Psoas muscle (tissue), 8 donors: ENCODE measurements at regions of chr15 and their contacts with region 1.

Region 1: DNA sequence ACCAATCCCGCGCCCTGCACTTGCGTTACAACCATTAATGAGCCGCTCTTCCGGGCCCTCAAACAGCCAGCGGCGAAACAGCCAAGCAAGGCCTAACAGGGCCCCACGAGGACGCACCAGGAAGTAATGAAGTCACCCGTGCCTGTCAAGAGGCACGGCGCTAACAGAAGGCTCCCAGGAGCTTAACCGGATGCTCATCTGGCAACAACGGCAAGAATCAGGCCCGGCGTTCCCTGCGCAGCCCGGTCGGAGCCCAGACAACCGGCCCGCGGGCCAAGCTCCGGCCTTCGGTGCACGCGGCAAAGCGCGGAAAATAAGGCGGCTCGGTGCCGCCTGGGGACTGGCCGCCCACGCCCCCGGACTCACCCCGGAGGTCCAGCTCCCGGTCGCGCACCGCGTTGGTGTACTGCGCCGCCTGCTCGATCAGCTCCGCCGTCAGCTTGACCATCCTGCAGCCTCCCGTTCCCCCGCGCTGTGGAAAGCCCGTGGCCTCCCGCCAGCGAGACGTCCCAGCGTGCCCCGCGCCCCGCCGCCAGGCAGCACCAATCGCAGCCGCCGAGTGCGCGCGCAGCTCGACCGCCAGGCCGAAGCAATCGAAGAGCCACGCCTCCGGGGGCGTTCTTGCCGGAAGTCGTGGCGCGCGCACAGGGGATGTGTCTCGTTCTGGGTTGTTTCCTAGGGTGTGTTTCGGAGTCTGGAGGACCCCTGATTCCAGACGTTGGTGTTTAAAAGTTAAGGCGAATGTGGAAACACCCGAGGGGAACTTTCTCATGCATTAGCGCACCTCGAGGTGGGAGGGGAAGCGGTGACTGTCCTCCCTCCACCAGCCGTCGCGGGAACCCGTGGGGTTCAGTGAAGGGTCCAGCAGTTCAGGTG is at the start of gene SNRPA1:
- DNase-seq: peak; percentile 99 to 100
- ATAC-seq: peak; percentile 94 to 95 (median 95)
- H3K4me3 ChIP-seq: peak within 1 kb of the TSS; percentile 99
- H3K27ac ChIP-seq: peak within 1 kb of the TSS; percentile 98
- H3K4me1 ChIP-seq: peaks cover 35% of the 10 kb centered on the region
- H3K27me3 ChIP-seq: no peaks in the 10 kb centered on the region
- CTCF ChIP-seq: no peak
- total RNA-seq, gene SNRPA1: 14.8 to 42.3 (median 28.0) TPM

Region 2: DNA sequence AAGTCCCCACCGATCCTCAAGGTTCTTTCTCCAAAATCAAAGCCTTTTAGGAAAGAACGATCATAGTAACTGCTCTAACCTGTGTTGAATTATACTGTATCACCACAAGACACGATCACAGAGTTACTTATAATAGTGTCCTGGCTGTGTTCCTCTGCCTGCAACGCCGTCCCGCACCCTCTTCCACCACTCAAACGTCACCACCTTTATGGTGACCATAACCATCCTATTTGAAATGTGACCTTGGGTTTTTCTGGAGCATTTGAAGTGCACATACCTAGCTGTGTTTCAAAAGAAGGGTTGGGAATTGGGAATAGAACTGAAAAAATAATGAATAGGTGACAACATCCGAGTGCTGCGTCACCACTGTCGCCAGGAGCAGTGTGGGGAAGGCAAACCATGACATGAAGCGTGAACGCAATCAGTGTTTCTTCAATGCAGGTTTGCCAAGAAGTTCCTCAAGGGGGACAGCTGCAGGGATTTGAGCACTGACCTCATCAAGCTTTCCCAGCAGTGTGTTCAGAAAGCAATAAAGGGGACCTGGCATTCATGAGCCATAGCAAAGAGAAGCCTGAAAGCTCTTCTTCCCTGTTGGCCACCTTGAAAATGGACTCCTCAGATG is 16.9 kb before region 1 on chr15:
- intact Hi-C with region 1: loop called in 1 of 2 experiments (anchors 2 kb)
- DNase-seq: no peak
- ATAC-seq: peak in 2 of 4 donors; percentile 26 to 47
- H3K4me3 ChIP-seq: peak overlapping the region; percentile 72
- H3K27ac ChIP-seq: peak overlapping the region; percentile 89
- H3K4me1 ChIP-seq: peaks cover 35% of the 10 kb centered on the region
- H3K27me3 ChIP-seq: no peaks in the 10 kb centered on the region
- CTCF ChIP-seq: no peak

Region 3: DNA sequence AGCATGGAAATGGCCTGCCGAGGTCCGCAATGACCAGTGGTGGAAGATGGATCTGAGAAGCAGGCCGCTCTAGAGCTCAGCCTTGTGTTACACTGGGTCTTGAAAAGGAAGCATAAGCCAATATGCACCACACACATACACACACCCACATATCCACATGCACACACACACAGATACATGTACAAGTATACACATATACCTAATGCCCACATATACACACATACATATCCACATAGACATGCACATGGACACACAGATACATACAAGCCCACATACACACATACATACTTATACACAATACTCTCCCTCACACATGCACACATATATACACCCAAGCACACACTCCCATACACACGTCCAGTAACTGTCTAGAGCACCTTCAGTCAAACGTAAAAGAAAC is 59.1 kb after region 1 on chr15:
- intact Hi-C with region 1: no loop called
- DNase-seq: no peak
- ATAC-seq: no peak
- H3K4me3 ChIP-seq: no peak overlapping the region
- H3K27ac ChIP-seq: no peak overlapping the region
- H3K4me1 ChIP-seq: peaks cover 6% of the 10 kb centered on the region
- H3K27me3 ChIP-seq: no peaks in the 10 kb centered on the region
- CTCF ChIP-seq: no peak

Region 4: DNA sequence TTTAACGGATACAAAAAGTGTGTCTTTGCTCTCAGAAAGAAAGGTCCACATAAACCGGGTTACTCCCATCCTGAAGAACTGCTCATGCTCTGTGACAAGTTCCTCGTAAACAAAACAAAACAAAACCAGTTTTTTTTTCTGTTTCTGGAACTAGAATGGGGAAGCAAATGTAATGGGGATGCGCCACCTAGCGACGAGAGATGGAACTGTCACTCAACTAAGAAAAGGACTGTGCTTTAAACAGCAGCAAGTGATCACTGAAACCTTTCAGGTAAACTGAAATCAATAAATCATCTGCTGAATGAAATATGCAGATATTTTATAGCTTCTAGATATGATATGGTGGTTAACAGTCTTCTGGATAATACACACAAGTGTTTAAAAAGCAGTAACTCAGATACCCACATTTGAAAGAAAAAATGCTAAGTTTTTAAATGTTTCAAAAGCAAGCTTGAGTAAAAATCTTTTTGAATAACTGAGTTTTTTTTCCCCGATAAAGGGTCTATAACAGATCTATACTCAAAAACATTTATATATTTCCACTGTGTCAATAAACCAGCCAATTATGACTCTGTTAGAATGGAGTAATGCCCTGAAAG is 346.3 kb after region 1 on chr15:
- intact Hi-C with region 1: loop called in 1 of 2 experiments (anchors 5 kb)
- DNase-seq: peak; percentile 65 to 76
- ATAC-seq: peak; percentile 31 to 79 (median 64)
- H3K4me3 ChIP-seq: peak overlapping the region; percentile 22
- H3K27ac ChIP-seq: peak overlapping the region; percentile 71
- H3K4me1 ChIP-seq: peaks cover 26% of the 10 kb centered on the region
- H3K27me3 ChIP-seq: no peaks in the 10 kb centered on the region
- CTCF ChIP-seq: peak; percentile 97

Region 5: DNA sequence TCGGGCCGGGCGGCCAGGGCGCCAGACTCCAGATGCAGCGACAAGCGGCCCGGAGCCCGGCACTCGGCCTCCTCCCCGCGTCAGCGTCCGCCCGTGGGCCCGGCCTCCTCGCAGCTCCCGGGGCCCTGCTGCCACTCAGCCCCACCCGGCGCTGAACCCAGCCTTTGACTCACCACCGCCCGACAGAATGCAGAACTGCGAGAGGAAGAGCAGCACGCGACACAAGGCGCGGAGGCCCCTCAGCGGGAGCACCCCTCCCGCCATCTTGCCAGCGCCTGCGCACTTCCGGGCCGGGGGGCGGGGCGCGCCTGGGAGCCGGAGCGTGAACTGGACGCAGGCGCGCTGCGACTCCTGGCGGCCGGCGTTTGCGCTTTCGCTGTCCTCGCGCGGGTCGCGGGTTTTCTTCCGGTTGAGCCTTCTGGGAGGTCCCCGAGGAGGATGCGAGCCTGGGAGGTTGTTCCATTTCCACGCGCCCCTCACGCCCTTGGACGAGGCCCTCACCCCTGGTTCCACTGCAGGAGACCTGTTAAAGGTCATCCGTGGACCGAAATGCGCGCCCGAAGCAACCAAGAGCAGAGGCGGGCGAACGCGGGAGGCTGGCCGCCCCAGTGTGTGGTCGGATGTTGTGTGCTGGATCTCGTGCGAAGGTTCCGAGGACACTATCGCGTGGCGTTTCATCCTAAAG is 357.3 kb after region 1 on chr15 and contains the start of gene TM2D3:
- intact Hi-C with region 1: loop called (anchors 2 to 5 kb)
- DNase-seq: peak; percentile 96 to 97
- ATAC-seq: peak; percentile 94 to 95 (median 94)
- H3K4me3 ChIP-seq: peak within 1 kb of the TSS; percentile 76
- H3K27ac ChIP-seq: peak within 1 kb of the TSS; percentile 95
- H3K4me1 ChIP-seq: peaks cover 31% of the 10 kb centered on the region
- H3K27me3 ChIP-seq: no peaks in the 10 kb centered on the region
- CTCF ChIP-seq: peak; percentile 81
- total RNA-seq, gene TM2D3: 34.8 to 46.9 (median 41.3) TPM